ENCODE measurements at regions of chr21 and their contacts with region 1.

Region 1: GRCh38 chr21:38349111-38349746 is 92.4 kb downstream of the KCNJ15 start:
- DNase-seq: no peak
- H3K4me3 Mint-ChIP-seq: no peak overlapping the region
- H3K27ac Mint-ChIP-seq: peak overlapping the region; percentile 91
- H3K4me1 Mint-ChIP-seq: peaks cover 37% of the 10 kb centered on the region
- H3K27me3 Mint-ChIP-seq: peaks cover 3% of the 10 kb centered on the region

Region 2: DNA sequence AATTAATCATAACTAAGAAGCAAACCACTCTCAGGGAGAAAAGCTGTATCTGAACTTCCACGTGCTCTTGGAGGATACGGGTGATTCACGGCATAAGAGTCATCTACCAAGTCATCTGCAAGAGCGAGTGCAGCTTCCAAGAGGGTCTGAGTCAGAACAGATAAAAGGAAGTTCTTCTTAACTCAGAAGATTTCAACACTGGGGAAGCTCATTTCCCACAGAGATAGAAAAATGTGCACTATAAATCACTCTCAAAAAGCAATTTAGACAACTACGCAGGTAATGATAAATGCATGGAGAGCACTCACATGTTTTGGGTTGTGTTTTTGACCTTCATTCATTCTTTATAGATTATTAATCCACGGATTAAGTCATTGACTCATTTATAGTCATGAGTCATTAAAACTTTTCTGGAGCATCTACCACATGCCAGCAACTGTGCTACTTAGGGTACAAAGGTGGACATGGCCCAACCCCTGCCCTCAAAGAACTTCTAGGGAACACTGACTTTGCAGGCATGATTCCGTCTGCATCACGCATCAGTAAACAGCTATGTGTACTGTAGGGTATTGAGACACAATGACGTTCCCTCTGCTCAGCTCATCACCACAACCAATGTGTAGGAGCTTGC is 71.6 kb before region 1 on chr21:
- intact Hi-C with region 1: loop called (anchors 2 kb)
- DNase-seq: no peak
- H3K4me3 Mint-ChIP-seq: no peak overlapping the region
- H3K27ac Mint-ChIP-seq: no peak overlapping the region
- H3K4me1 Mint-ChIP-seq: peaks cover 9% of the 10 kb centered on the region
- H3K27me3 Mint-ChIP-seq: peaks cover 4% of the 10 kb centered on the region

Region 3: DNA sequence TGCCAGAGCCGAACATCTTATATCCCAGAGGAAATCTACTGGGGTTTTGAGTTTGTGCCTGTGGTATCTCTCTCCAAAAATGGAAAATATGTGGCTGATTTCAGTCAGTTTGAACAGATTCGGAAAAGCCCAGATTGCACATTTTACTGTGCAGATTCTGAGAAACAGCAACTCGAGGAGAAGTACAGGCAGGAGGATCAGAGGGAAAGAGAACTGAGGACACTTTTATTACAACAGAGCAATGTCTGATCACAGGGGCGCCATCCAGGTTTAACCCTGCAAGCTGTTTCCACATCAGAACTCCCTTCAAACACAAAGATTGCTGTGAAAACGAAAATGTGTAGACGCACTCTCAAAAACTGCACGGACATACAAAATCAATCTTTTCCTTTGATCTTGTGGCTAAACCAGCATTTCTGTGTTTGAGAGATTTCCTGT is 49.1 kb before region 1 on chr21:
- intact Hi-C with region 1: loop called (anchors 2 kb)
- DNase-seq: no peak
- H3K4me3 Mint-ChIP-seq: peak overlapping the region; percentile 23
- H3K27ac Mint-ChIP-seq: no peak overlapping the region
- H3K4me1 Mint-ChIP-seq: peaks cover 28% of the 10 kb centered on the region
- H3K27me3 Mint-ChIP-seq: no peaks in the 10 kb centered on the region

Region 4: DNA sequence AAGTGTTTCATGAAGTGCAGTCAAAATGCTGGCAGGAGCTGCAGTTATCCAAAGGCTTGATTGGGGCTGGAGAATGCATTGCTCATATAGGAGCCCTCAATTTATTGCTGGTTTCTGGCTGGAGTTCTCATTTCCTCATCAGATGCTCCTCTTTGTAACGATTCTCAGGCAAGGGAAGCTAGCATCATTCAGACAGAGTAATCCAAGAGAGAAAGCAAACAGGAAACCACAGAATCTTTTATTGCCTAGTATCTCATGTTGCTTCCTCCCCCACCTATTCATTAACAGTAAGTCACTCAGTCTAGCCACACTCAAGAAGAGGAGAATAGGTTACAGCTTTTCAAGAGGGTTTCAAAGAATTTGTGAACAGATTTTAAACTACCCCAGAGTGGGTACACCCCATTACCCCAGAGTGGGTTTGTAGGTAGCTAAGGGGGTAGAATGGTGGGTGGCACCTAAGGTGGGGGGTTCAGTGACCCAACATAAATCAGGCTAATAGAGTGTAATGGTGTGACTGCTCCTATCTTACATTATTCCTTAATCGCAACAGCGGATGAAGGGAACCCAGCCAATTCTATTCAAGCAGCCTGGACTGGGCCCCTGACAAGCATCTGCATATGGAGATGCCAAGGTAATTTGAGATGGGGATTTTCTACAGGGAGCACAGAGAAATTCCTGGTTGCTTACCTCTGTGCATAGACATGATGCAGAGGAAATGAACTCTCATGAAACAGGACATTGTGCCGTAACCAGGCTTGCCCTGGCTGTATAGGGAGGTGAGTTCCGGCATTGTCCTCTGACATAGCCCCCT is 25.3 kb before region 1 on chr21:
- intact Hi-C with region 1: loop called (anchors 1 kb)
- DNase-seq: no peak
- H3K4me3 Mint-ChIP-seq: no peak overlapping the region
- H3K27ac Mint-ChIP-seq: no peak overlapping the region
- H3K4me1 Mint-ChIP-seq: peaks cover 21% of the 10 kb centered on the region
- H3K27me3 Mint-ChIP-seq: no peaks in the 10 kb centered on the region

Measured in activated T-helper 1 cell treated with anti-CD3 and anti-CD28 coated beads, Interleukin-12 subunit alpha, Interleukin-12 subunit beta, Interleukin-2, Interleukin-4 antibody, amounts not matched to agents 30 ng/mL and 10 ng/mL and 1 ng/mL, durations not matched to agents 14 hours and 24 hours and 36 hours (primary cell).